ENCODE measurements at regions of chr18 and their contacts with region 1.

Region 1: GRCh38 chr18:3665780-3666525 is 216.0 kb downstream of the TGIF1 start:
- DNase-seq: peak; percentile 39 to 83 (median 75)
- ATAC-seq: peak; percentile 91
- H3K4me3 ChIP-seq: no peak overlapping the region
- H3K4me3 Mint-ChIP-seq: peak overlapping the region; percentile 35
- H3K27ac ChIP-seq: no peak overlapping the region
- H3K27ac Mint-ChIP-seq: no peak overlapping the region
- H3K4me1 ChIP-seq: no peaks in the 10 kb centered on the region
- H3K4me1 Mint-ChIP-seq: peaks cover 8% of the 10 kb centered on the region
- H3K27me3 ChIP-seq: no peaks in the 10 kb centered on the region
- H3K27me3 Mint-ChIP-seq: peaks cover 2% of the 10 kb centered on the region
- CTCF ChIP-seq: peak; percentile 96

Region 2: GRCh38 chr18:2425426-2426317 is 1240.3 kb before region 1 on chr18:
- CTCF ChIA-PET with region 1: no interaction called
- POLR2A ChIA-PET with region 1: no interaction called
- intact Hi-C with region 1: no loop called
- DNase-seq: no peak
- ATAC-seq: no peak
- H3K4me3 ChIP-seq: no peak overlapping the region
- H3K4me3 Mint-ChIP-seq: no peak overlapping the region
- H3K27ac ChIP-seq: no peak overlapping the region
- H3K27ac Mint-ChIP-seq: no peak overlapping the region
- H3K4me1 ChIP-seq: no peaks in the 10 kb centered on the region
- H3K4me1 Mint-ChIP-seq: no peaks in the 10 kb centered on the region
- H3K27me3 ChIP-seq: no peaks in the 10 kb centered on the region
- H3K27me3 Mint-ChIP-seq: peaks cover 14% of the 10 kb centered on the region
- CTCF ChIP-seq: no peak

Region 3: DNA sequence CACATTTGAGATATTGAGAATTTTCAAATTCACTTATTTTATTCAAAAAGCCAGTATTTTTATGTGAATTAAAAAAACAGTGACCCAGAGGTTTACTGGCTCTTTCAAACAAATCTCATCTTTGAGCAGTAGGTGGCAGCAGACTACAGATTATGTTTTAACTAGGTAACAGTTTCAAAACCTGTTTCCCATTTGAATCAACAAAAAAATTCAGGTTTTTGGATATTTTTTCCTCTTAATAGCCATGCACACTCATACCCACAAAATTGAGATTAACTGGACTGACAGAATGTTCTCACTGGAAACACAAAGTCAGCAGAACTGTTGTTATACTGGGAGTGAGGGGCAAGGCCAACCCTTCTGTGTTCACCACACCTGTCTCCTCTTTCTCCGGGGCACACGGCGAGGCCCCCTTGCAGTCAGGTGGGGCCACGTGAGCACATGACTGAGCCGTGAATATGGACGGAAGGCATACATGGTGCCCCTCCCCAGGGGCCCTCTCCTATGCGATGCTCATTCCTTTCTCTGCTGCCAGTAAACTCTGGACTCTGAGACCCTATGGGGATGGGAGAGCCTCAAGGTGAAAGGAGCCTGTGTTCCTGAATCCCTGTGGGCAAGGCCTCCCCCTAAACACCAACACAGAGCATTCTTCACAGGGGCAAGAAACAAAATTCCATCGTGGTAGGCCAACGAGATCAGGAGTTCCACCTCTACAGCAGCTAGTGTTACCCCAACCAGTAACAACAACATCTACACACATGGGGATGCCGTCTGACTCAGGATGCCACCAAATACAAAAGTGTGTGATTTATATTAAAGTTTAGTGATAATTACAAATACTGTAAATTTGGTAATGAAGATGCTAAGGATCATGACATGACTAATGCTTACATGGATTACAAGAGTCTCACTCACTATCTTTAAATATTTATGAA is 733.4 kb before region 1 on chr18:
- CTCF ChIA-PET with region 1: no interaction called
- POLR2A ChIA-PET with region 1: no interaction called
- intact Hi-C with region 1: loop called in 1 of 2 experiments (anchors 1 kb)
- DNase-seq: peak in 6 of 9 experiments; percentile 37 to 82 (median 52)
- ATAC-seq: peak; percentile 79
- H3K4me3 ChIP-seq: no peak overlapping the region
- H3K4me3 Mint-ChIP-seq: no peak overlapping the region
- H3K27ac ChIP-seq: peak overlapping the region in 1 of 2 experiments; percentile 51
- H3K27ac Mint-ChIP-seq: peak overlapping the region; percentile 89
- H3K4me1 ChIP-seq: peaks cover 6% of the 10 kb centered on the region
- H3K4me1 Mint-ChIP-seq: peaks cover 23% of the 10 kb centered on the region
- H3K27me3 ChIP-seq: no peaks in the 10 kb centered on the region
- H3K27me3 Mint-ChIP-seq: no peaks in the 10 kb centered on the region
- CTCF ChIP-seq: peak; percentile 96

Region 4: DNA sequence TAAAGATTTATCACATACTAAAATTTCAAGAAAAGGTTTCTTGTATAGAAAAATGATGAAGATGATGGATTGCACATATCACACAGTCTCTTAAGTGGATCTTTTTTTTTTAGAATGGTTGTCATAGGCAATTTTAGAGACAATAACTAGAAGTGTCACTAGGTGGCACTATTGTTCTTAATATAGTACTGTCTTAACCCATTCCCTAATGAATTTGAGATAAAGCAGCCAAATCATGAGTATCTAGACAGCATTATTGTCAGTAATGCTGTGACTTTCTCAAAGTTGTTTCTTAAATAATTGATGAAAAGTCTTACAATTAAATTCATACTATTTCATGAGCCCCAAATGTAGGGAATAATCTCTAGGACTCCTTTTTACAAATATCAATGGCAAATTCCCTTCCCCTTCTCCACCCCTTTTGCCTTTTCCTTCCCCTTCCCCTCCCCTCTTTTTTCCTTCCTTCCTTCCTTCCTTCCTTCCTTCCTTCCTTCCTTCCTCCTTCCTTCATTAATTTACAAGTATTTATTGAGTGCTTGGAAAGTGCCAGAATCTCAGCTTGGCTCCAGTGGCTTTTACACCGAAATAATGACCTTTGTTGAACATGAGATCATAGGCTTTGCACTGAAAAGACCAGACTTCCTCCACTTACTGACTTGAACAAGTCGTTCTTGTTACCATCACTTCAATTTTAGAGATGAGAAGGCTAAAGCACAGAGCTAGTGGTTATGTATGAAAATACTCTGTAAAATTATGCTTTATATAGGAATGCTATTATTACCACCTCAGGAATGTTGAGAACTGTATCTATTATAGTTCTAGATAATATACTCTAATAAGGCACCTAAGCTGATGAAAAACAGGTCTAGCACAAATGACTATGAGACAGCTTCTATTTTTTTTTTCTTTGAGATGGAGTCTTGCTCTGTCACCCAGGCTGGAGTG is 384.2 kb before region 1 on chr18:
- CTCF ChIA-PET with region 1: interaction called, 352 read pairs
- POLR2A ChIA-PET with region 1: interaction called, 4 read pairs
- intact Hi-C with region 1: loop called (anchors 1 kb)
- DNase-seq: peak in 2 of 9 experiments; percentile 77 to 84
- ATAC-seq: peak; percentile 93
- H3K4me3 ChIP-seq: no peak overlapping the region
- H3K4me3 Mint-ChIP-seq: no peak overlapping the region
- H3K27ac ChIP-seq: no peak overlapping the region
- H3K27ac Mint-ChIP-seq: no peak overlapping the region
- H3K4me1 ChIP-seq: no peaks in the 10 kb centered on the region
- H3K4me1 Mint-ChIP-seq: peaks cover 4% of the 10 kb centered on the region
- H3K27me3 ChIP-seq: no peaks in the 10 kb centered on the region
- H3K27me3 Mint-ChIP-seq: no peaks in the 10 kb centered on the region
- CTCF ChIP-seq: peak; percentile 75

Region 5: DNA sequence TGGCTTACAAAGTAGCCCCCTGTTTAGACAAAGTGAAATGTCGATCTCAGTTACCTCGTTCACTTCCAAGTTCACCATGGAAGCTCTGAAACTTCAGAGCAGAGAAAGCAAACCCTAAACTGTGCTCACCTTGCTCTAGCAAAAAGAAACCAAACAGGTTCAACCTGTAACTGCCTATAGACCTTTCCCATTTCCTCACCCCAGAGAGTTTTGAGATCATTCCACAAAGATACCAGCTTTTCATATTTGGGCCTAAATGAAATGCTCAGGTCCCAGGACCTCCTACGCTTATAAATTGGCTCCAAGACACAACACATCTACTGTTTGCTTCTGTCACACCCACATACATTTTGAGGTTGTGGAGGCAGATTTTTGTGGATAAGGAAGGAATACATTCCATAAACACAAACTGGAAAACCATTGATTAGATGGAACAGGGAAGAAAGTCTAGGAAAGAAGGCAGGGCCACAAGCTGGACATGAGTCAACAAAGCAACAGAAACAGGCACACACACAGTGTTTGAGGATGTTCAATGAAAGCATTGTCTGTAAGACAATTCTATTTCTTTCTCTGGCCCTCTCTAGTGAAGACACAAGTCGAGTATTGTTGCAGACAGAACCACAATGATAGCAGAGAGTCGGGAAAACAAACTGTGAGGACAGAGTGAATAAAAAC is 268.7 kb before region 1 on chr18:
- CTCF ChIA-PET with region 1: interaction called, 12 read pairs
- POLR2A ChIA-PET with region 1: no interaction called
- intact Hi-C with region 1: no loop called
- DNase-seq: no peak
- ATAC-seq: no peak
- H3K4me3 ChIP-seq: no peak overlapping the region
- H3K4me3 Mint-ChIP-seq: no peak overlapping the region
- H3K27ac ChIP-seq: no peak overlapping the region
- H3K27ac Mint-ChIP-seq: no peak overlapping the region
- H3K4me1 ChIP-seq: no peaks in the 10 kb centered on the region
- H3K4me1 Mint-ChIP-seq: no peaks in the 10 kb centered on the region
- H3K27me3 ChIP-seq: no peaks in the 10 kb centered on the region
- H3K27me3 Mint-ChIP-seq: peaks cover 3% of the 10 kb centered on the region
- CTCF ChIP-seq: no peak

Region 6: DNA sequence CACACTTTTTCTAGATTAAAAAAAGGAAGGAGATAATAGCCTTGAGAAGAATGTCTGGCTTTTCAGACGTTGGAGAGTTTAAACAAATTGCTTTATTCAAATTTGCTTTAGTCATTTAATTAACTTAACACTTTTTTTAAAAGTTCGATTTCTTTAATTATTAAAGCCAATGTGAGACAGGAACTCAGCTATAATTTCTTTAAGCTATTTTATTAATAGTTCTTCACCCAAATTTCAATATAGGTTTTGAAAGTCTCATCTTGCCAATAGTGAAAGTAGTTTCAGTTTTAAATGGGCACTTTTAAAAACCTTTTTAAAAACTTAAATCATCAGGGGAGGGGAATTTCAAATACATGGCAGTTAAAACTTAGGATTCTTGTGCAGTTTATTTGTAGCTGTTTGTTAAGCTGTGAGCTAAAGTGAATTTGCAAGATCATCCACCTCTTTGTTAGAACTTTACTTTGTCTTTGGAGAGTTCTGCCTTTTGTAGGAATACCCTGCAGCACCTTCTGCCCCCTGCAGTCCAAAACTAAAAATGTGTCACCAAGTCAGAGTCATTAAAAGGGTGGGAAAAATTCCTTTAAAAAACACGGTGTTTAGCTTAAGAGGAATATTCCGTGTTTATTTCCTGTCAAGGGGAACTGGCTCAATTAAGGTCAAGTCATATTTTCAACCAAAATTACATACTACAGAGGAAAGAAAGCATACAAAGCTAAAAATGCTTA is 211.4 kb before region 1 on chr18:
- CTCF ChIA-PET with region 1: interaction called, 64 read pairs
- POLR2A ChIA-PET with region 1: no interaction called
- intact Hi-C with region 1: loop called (anchors 1 to 5 kb)
- DNase-seq: peak in 6 of 9 experiments; percentile 23 to 79 (median 37)
- ATAC-seq: no peak
- H3K4me3 ChIP-seq: peak overlapping the region; percentile 30 to 42
- H3K4me3 Mint-ChIP-seq: peak overlapping the region; percentile 92
- H3K27ac ChIP-seq: peak overlapping the region; percentile 38 to 100
- H3K27ac Mint-ChIP-seq: peak overlapping the region; percentile 100
- H3K4me1 ChIP-seq: peaks cover 21% of the 10 kb centered on the region
- H3K4me1 Mint-ChIP-seq: peaks cover 61% of the 10 kb centered on the region
- H3K27me3 ChIP-seq: no peaks in the 10 kb centered on the region
- H3K27me3 Mint-ChIP-seq: no peaks in the 10 kb centered on the region
- CTCF ChIP-seq: peak; percentile 87

Region 7: DNA sequence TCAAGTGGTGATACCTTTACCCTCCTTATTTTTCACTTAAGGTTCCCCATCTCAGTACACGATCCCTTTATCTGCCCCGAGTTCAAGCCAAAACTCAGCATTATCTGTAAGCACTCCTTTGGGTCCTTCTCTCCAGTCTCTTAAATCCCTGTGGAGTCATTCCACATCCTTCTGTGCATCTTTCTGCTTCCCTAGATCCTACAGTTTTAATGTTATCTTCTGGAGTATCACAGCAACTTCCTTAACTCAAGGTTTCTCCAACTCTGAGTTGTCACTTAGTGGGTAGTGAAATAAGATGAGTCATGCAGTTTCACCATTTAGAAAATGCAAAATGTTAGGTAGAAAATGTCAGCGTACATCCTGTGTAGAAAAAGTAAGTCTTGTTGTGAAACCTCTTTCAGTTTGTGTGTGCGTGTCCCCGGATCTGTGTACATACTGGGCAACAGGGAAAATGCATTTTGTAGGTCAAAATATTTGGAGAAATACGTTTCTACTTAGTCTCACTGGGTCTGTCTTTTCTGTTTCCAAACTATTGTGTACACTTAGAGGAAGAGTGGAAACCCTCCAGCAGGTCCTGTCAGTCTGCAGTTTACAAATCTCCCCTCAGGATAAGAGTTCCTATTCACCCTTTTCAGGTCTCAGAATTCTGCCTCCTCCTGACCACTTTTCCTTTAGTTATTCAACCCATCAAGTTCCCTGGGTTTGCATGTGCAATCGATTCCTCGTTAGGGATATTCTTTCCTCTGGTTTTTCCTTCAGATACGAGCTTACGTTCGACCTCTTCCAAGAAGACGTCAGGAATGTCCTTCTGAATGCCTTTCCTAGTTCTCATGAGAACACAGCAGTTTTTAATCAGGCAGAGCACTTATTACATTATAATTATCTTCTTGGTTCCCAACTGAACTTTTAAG is 61.2 kb before region 1 on chr18:
- CTCF ChIA-PET with region 1: interaction called, 21 read pairs
- POLR2A ChIA-PET with region 1: no interaction called
- intact Hi-C with region 1: loop called in 1 of 2 experiments (anchors 5 kb)
- DNase-seq: peak in 3 of 9 experiments; percentile 22 to 79 (median 61)
- ATAC-seq: peak; percentile 62
- H3K4me3 ChIP-seq: peak overlapping the region; percentile 24 to 52
- H3K4me3 Mint-ChIP-seq: no peak overlapping the region
- H3K27ac ChIP-seq: peak overlapping the region; percentile 14 to 90
- H3K27ac Mint-ChIP-seq: no peak overlapping the region
- H3K4me1 ChIP-seq: peaks cover 44% of the 10 kb centered on the region
- H3K4me1 Mint-ChIP-seq: peaks cover 14% of the 10 kb centered on the region
- H3K27me3 ChIP-seq: no peaks in the 10 kb centered on the region
- H3K27me3 Mint-ChIP-seq: no peaks in the 10 kb centered on the region
- CTCF ChIP-seq: no peak

Region 8: DNA sequence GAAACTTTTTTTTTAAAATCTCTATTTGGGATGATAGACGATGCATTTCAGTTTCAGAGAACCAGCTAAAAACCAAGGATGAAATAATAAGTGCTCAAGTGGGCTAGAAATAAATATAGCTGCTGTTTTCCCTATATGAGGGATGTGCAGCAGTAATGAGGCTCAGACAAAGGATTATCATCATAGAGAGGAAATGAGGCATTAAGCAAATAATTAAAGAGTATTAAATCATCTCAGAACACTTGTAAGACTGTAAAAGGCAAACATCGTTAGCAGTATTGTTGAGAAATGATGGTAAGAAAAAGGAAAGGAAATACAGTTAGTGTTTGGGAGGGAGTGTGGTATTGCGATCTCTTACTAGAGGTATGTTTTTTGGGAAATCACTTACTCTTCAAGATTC is 17.5 kb after region 1 on chr18:
- CTCF ChIA-PET with region 1: interaction called, 49 read pairs
- POLR2A ChIA-PET with region 1: no interaction called
- intact Hi-C with region 1: no loop called
- DNase-seq: no peak
- ATAC-seq: no peak
- H3K4me3 ChIP-seq: no peak overlapping the region
- H3K4me3 Mint-ChIP-seq: no peak overlapping the region
- H3K27ac ChIP-seq: no peak overlapping the region
- H3K27ac Mint-ChIP-seq: no peak overlapping the region
- H3K4me1 ChIP-seq: no peaks in the 10 kb centered on the region
- H3K4me1 Mint-ChIP-seq: no peaks in the 10 kb centered on the region
- H3K27me3 ChIP-seq: no peaks in the 10 kb centered on the region
- H3K27me3 Mint-ChIP-seq: no peaks in the 10 kb centered on the region
- CTCF ChIP-seq: no peak